Gastrocnemius medialis (tissue), 4 donors: ENCODE measurements at regions of chr3 and their contacts with region 1.

Region 1: DNA sequence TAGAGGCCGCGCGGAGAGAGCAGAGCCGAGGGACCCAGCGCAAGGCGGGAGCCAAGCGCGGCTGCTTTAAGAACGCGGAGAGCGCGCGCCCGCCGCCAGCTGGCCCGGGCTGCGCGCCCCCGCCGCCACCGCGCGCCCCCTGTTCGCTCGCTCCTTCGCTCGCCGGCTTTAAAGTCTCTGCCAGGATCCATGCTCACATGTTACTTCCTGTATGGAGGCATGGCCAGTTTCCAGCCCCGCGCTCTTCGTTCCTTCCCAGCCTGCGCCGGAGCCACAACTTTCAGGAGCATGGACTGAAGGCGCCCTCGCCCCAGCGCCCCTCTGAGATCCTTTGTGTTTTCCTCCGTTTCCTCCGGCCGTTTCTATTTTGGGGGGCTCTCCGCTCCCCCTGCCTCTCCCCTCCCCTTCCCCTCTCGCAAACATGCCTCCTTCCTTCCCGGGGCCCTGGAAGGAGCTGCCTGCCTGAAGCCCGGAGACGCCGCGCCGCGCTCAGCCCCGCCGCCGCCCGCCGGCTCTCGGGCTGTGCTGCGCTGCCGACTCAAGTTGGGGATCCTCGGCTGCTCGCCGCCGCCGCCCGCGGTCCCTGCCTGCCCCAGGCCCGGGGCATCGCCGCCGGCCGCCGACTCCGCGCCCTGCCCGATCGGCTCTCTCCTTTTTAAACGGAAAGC is at the start of gene PTPRG:
- DNase-seq: peak; percentile 91
- ATAC-seq: peak; percentile 81 to 86
- H3K4me3 ChIP-seq: peak within 1 kb of the TSS; percentile 83 to 95 (median 88)
- H3K27ac ChIP-seq: peak within 1 kb of the TSS; percentile 95 to 99 (median 97)
- H3K4me1 ChIP-seq: peaks cover 10 to 17% of the 10 kb centered on the region in 2 donors
- H3K27me3 ChIP-seq: no peaks in the 10 kb centered on the region
- CTCF ChIP-seq: no peak
- POLR2A ChIP-seq: peak; percentile 86 to 90
- total RNA-seq, gene PTPRG: 21.1 to 54.2 (median 30.6) TPM

Region 2: GRCh38 chr3:61251174-61251972 is 310.1 kb before region 1 on chr3 and contains the start of gene FHIT:
- in situ Hi-C with region 1: no loop called
- intact Hi-C with region 1: loop called (anchors 2 kb)
- DNase-seq: peak; percentile 96 to 97
- ATAC-seq: peak; percentile 94 to 95
- H3K4me3 ChIP-seq: peak within 1 kb of the TSS; percentile 75 to 97 (median 84)
- H3K27ac ChIP-seq: peak within 1 kb of the TSS; percentile 86 to 96 (median 86)
- H3K4me1 ChIP-seq: peaks cover 10 to 17% of the 10 kb centered on the region in 2 donors
- H3K27me3 ChIP-seq: no peaks in the 10 kb centered on the region
- CTCF ChIP-seq: no peak
- POLR2A ChIP-seq: peak; percentile 49 to 66
- total RNA-seq, gene FHIT: 0.72 to 5.2 (median 2.1) TPM

Region 3: GRCh38 chr3:61371123-61371522 is 190.4 kb before region 1 on chr3:
- in situ Hi-C with region 1: no loop called
- intact Hi-C with region 1: no loop called
- DNase-seq: no peak
- ATAC-seq: no peak
- H3K4me3 ChIP-seq: no peak overlapping the region
- H3K27ac ChIP-seq: no peak overlapping the region
- H3K4me1 ChIP-seq: no peaks in the 10 kb centered on the region
- H3K27me3 ChIP-seq: no peaks in the 10 kb centered on the region
- CTCF ChIP-seq: peak in 1 of 5 experiments; percentile 14
- POLR2A ChIP-seq: no peak

Region 4: DNA sequence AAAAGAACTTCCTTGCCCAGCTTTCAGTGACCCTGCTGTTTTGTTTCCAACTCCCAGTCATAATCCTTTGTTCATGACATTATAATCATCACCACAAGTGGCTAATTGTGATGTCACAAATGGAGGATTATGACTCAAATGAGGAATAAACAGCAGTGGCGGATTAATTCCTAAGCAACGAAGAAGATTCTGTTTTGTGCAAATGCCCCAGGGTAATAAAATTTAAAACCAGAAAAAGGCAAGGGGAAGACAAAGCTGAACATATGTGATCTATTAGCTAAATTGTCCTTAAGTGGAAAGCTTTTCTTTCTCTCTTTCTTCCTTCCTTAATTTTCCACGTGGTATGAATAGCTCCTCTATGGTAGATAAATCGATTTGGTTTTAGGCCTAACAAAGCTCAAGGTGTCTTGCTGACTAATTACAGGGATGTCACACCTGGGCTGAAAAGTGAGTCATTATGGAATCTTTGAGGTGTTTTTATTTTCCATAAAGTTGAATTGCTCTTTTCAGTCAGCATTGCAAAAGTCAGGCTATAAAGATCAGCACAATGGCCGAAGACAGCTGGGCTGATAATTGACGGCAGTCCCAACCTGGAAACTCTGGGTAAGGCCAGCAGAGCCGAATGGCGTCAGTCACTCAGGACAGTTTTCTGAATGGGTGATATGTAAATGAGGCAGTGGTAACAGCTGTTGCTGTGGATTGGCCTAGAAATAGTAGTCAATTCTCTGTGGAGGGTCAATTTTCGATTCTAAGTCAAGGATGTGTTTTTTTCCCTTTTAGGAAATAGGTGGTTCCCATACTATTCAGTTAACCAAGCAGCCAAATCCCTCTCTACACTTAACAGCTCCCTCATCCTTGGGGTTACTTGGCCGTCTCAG is 121.4 kb after region 1 on chr3:
- in situ Hi-C with region 1: no loop called
- intact Hi-C with region 1: loop called (anchors 5 kb)
- DNase-seq: no peak
- ATAC-seq: peak; percentile 26 to 40
- H3K4me3 ChIP-seq: no peak overlapping the region
- H3K27ac ChIP-seq: peak overlapping the region; percentile 49 to 71 (median 64)
- H3K4me1 ChIP-seq: peaks cover 44 to 49% of the 10 kb centered on the region in 2 donors
- H3K27me3 ChIP-seq: no peaks in the 10 kb centered on the region
- CTCF ChIP-seq: no peak
- POLR2A ChIP-seq: no peak

Region 5: DNA sequence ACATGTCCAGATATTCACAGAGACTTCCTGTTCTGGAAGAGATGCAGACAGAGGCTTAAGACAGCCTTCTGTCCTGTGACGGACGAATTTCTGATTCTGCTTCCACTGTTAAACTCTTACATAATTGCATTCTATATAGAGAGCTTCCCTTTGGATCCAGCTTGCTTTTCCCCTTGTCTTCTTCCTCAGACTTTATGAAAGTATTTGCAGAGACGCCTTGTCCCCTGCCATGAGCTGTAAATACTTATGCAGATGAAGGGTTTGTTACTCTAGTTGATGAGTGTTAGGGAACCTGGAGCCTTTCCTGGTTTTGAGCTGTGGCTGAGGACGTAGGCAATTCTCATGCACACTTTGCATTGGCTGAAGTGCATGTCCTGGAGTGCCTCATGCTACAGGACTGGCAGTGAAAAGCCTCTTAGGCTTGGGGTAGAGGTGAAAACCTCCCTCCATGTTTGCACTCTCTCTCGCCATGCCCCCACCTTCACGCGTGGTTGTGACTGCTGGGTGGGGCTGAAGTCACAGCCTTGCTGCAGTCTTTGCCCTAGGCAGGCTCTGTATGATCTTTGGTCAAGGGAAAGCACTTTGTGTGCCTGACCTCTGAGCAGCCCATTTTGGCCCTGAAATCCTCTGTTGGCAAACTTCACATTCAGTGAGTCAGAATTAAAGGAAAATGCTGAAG is 286.4 kb after region 1 on chr3:
- in situ Hi-C with region 1: loop called in 3 of 4 experiments (anchors 25 kb)
- intact Hi-C with region 1: no loop called
- DNase-seq: peak in 1 of 2 donors; percentile 46
- ATAC-seq: peak; percentile 67 to 73
- H3K4me3 ChIP-seq: peak overlapping the region in 1 of 4 donors; percentile 15
- H3K27ac ChIP-seq: peak overlapping the region; percentile 56 to 82 (median 75)
- H3K4me1 ChIP-seq: peaks cover 35 to 46% of the 10 kb centered on the region in 2 donors
- H3K27me3 ChIP-seq: no peaks in the 10 kb centered on the region
- CTCF ChIP-seq: no peak
- POLR2A ChIP-seq: no peak

Region 6: DNA sequence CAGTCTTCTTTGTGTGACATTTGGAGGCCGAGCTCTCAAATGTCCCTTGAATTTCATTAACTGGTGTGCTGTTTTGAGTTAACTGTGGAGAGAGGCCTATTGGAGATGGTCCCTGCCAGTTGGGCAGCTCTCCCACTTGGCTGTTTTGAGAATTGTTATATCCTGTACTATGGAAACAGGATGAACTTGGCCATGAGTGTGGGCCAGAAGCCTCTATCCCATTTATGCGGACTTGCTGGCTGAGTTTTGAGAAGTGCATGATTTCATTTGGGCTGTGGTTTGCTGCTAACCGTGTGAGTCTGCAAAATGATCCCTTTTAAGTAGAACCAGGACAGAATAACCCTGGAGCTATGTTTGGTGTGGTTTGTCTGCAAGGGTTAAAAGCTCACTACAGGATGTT is 365.8 kb after region 1 on chr3:
- in situ Hi-C with region 1: loop called in 1 of 4 experiments (anchors 25 kb)
- intact Hi-C with region 1: loop called (anchors 2 kb)
- DNase-seq: peak; percentile 69 to 84
- ATAC-seq: peak; percentile 59 to 64
- H3K4me3 ChIP-seq: peak overlapping the region; percentile 4 to 42 (median 26)
- H3K27ac ChIP-seq: peak overlapping the region; percentile 86 to 93 (median 91)
- H3K4me1 ChIP-seq: peaks cover 54 to 73% of the 10 kb centered on the region in 2 donors
- H3K27me3 ChIP-seq: no peaks in the 10 kb centered on the region
- CTCF ChIP-seq: no peak
- POLR2A ChIP-seq: no peak

Region 7: DNA sequence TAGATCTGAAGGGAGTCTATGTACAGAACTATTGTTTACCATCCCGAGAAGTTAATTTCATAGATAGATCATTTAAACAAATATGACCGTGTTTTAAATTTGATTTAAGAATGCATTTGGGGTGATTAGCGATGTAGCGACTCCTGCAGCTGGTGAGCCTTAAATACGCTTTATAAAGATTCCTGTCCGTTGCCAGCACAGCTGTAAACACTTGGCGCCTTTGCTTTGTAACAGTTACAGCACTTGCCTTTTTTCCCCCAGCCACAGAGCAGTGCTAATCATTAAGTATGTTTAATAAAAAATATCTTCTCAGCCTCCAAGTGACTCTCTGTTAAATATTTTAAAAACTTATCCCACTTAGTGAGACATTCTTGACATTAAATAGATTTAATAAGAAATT is 478.1 kb after region 1 on chr3:
- in situ Hi-C with region 1: no loop called
- intact Hi-C with region 1: loop called (anchors 5 kb)
- DNase-seq: no peak
- ATAC-seq: no peak
- H3K4me3 ChIP-seq: no peak overlapping the region
- H3K27ac ChIP-seq: peak overlapping the region; percentile 71 to 76 (median 74)
- H3K4me1 ChIP-seq: peaks cover 17 to 24% of the 10 kb centered on the region in 2 donors
- H3K27me3 ChIP-seq: no peaks in the 10 kb centered on the region
- CTCF ChIP-seq: no peak
- POLR2A ChIP-seq: no peak

Region 8: GRCh38 chr3:62128051-62128450 is 566.5 kb after region 1 on chr3:
- in situ Hi-C with region 1: no loop called
- intact Hi-C with region 1: loop called (anchors 5 kb)
- DNase-seq: peak; percentile 61 to 84
- ATAC-seq: peak; percentile 95 to 98
- H3K4me3 ChIP-seq: no peak overlapping the region
- H3K27ac ChIP-seq: peak overlapping the region; percentile 39 to 69 (median 65)
- H3K4me1 ChIP-seq: peaks cover 21 to 40% of the 10 kb centered on the region in 2 donors
- H3K27me3 ChIP-seq: no peaks in the 10 kb centered on the region
- CTCF ChIP-seq: no peak
- POLR2A ChIP-seq: no peak